ENCODE measurements at regions of chr20 and their contacts with region 1.

Region 1: GRCh38 chr20:44187051-44187762 is at the start of gene JPH2:
- DNase-seq: no peak
- H3K4me3 ChIP-seq: no peak within 1 kb of the TSS
- H3K27ac ChIP-seq: no peak within 1 kb of the TSS
- H3K4me1 ChIP-seq: peaks cover 3% of the 10 kb centered on the region
- H3K27me3 ChIP-seq: peaks cover 14 to 18% of the 10 kb centered on the region in 2 experiments
- CTCF ChIP-seq: no peak
- POLR2A ChIP-seq: no peak
- total RNA-seq, gene JPH2: not detected in 2 replicates

Region 2: DNA sequence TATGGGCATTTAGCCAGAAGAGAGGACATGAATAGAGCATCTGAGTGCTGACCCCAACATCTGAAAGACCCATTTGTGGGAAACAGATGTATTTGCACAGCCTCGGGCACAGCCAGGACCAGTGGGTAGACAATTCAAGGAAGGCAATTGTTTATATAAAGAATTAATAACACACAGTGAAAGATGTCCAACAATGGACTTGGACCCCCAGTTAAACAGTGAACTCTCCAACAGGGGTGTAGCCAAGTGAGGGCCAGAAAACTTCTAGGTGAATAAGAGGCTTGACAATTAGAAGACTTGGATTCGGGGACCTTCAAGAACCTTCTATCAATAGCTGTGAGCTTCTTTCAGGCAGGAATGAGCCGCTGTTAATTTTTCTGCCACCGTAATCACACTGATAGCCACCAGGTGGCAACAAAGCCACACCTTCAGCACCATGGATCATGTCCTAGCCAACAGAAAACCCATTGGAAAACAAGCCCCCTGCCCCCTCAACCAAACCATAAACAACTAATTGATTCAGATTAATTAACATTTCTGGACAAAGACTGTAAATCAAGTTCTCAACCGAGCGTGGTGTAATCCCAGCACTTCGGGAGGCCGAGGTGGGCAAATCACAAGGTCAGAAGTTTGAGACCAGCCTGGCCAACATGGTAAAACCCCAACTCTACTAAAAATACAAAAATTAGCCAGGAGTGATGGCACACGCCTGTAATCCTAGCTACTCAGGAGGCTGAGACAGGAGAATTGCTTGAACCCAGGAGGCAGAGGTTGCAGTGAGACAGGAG is 738.3 kb before region 1 on chr20:
- CTCF ChIA-PET with region 1: interaction called, 16 read pairs
- POLR2A ChIA-PET with region 1: no interaction called
- dilution Hi-C with region 1: no loop called
- intact Hi-C with region 1: no loop called
- DNase-seq: peak; percentile 78
- H3K4me3 ChIP-seq: no peak overlapping the region
- H3K27ac ChIP-seq: no peak overlapping the region
- H3K4me1 ChIP-seq: peaks cover 7% of the 10 kb centered on the region
- H3K27me3 ChIP-seq: peaks cover 10 to 16% of the 10 kb centered on the region in 2 experiments
- CTCF ChIP-seq: peak; percentile 67 to 68
- POLR2A ChIP-seq: no peak

Region 3: DNA sequence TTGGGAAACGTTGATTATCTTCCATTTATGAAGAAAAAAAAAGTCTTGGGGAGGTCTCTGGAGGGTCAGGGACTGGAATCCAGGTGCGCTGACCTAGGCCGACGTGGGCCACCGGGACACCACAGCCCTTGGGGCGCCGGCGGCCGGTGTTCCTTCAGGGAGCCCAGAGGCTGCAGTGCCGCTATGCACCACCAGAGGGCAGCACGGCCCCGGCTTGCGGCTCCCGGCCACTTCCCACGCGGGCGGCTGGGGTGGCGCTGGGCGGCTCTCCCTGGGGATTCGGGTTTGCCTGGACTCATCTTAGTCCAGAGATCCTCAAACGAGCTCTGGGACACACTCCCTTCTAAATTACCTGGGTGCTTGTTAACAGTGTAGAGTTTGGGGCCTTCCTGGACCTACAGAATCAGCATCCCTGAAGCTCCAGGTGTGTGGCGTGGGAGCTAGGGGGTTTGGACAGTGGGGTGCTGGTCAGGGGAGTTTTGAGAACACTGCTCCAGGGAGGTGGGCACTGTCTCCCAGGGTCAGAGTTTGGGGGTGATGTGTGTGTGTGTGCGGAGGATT is 437.4 kb before region 1 on chr20:
- CTCF ChIA-PET with region 1: interaction called, 6 read pairs
- POLR2A ChIA-PET with region 1: no interaction called
- dilution Hi-C with region 1: no loop called
- intact Hi-C with region 1: loop called (anchors 2 kb)
- DNase-seq: peak; percentile 37
- H3K4me3 ChIP-seq: no peak overlapping the region
- H3K27ac ChIP-seq: no peak overlapping the region
- H3K4me1 ChIP-seq: peaks cover 12% of the 10 kb centered on the region
- H3K27me3 ChIP-seq: no peaks in the 10 kb centered on the region
- CTCF ChIP-seq: peak; percentile 99
- POLR2A ChIP-seq: no peak

Region 4: DNA sequence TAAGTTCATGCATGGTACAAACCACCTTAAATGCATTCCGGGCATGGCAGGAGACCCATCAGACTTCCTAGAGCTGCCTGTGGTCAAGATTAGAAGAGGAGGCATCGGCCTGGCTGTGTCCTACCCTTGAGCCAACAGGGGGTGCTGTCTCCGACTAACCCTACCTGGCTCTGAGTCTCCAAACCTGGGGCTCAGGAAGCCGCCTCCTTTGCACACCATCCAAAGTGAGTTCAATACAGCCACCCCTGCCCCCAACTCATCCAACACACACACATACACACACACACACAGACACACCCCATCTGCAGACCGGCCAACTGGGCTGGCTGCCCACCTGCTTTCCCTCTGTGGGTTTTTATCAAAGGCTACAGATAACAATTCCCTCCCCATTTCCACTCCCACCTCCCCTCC is 77.3 kb before region 1 on chr20:
- CTCF ChIA-PET with region 1: interaction called, 49 read pairs
- POLR2A ChIA-PET with region 1: no interaction called
- dilution Hi-C with region 1: no loop called
- intact Hi-C with region 1: no loop called
- DNase-seq: no peak
- H3K4me3 ChIP-seq: no peak overlapping the region
- H3K27ac ChIP-seq: no peak overlapping the region
- H3K4me1 ChIP-seq: no peaks in the 10 kb centered on the region
- H3K27me3 ChIP-seq: peaks cover 9% of the 10 kb centered on the region in 2 experiments
- CTCF ChIP-seq: peak; percentile 6 to 8
- POLR2A ChIP-seq: no peak

Region 5: DNA sequence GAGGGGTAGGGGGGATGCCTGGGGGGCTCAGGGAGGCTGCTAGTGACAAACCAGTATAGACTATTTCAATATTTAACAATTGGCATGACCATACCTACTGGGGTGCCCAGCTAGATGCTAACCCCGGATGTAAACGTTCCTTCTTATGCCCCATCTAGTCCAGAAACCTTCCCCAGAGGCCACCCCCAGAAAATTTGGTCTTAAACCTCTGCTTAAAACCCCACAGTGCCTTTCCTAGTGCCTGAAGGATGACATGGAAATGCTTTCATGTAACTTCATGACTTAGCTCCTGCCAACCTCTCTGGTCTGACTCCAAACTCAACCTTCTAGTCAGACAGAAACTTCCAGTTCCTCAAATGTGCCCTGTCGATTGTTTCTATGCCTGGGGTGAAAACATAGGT is 52.2 kb before region 1 on chr20:
- CTCF ChIA-PET with region 1: interaction called, 14 read pairs
- POLR2A ChIA-PET with region 1: no interaction called
- dilution Hi-C with region 1: no loop called
- intact Hi-C with region 1: no loop called
- DNase-seq: no peak
- H3K4me3 ChIP-seq: no peak overlapping the region
- H3K27ac ChIP-seq: no peak overlapping the region
- H3K4me1 ChIP-seq: no peaks in the 10 kb centered on the region
- H3K27me3 ChIP-seq: peaks cover 5% of the 10 kb centered on the region in 2 experiments
- CTCF ChIP-seq: no peak
- POLR2A ChIP-seq: no peak

Region 6: DNA sequence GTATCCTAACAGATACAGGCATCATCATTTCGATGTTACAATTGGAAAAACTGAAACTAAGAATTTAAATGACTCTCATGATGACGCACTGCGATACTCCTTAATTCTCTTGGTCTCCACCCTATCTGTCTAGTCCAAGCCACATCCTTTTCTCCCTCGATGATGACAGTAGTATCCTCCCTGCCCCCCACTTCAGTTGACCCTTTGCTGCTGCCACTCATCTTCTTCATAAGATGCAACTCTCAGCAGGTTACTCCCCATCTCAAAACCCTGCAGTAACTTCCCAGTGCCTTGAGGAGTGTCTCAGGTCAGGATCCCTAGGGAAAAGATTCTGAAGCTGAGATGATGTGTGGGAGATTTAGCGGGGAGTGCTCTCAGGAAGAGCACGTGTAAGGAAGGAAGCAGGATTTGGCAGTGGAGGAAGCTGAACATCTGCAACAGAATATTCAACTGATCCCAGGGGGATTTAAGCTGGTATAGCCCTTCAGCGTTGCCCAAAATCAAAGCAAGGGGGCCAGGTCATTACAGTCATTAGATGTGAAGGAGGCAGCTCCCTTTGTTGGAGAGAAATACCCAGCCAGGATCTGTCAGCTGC is 16.3 kb before region 1 on chr20:
- CTCF ChIA-PET with region 1: interaction called, 11 read pairs
- POLR2A ChIA-PET with region 1: no interaction called
- dilution Hi-C with region 1: no loop called
- intact Hi-C with region 1: no loop called
- DNase-seq: no peak
- H3K4me3 ChIP-seq: no peak overlapping the region
- H3K27ac ChIP-seq: no peak overlapping the region
- H3K4me1 ChIP-seq: no peaks in the 10 kb centered on the region
- H3K27me3 ChIP-seq: peaks cover 11 to 24% of the 10 kb centered on the region in 2 experiments
- CTCF ChIP-seq: no peak
- POLR2A ChIP-seq: no peak